Heart right ventricle (tissue), 16 donors: ENCODE measurements at regions of chr6 and their contacts with region 1.

Region 1: GRCh38 chr6:33200219-33201146 is at the starts of genes RXRB and SLC39A7:
- DNase-seq: peak; percentile 99 to 100
- ATAC-seq: peak; percentile 84 to 95 (median 92)
- H3K4me3 ChIP-seq: peak within 1 kb of the TSS; percentile 56 to 97 (median 80)
- H3K27ac ChIP-seq: peak within 1 kb of the TSS; percentile 94 to 99 (median 98)
- H3K4me1 ChIP-seq: peaks cover 27 to 78% (median 66%) of the 10 kb centered on the region in 9 donors
- H3K27me3 ChIP-seq: no peaks in the 10 kb centered on the region
- CTCF ChIP-seq: no peak
- total RNA-seq, gene RXRB: 29.7 to 39.1 (median 33.2) TPM
- total RNA-seq, gene SLC39A7: 44.8 to 104 (median 53.1) TPM

Region 2: DNA sequence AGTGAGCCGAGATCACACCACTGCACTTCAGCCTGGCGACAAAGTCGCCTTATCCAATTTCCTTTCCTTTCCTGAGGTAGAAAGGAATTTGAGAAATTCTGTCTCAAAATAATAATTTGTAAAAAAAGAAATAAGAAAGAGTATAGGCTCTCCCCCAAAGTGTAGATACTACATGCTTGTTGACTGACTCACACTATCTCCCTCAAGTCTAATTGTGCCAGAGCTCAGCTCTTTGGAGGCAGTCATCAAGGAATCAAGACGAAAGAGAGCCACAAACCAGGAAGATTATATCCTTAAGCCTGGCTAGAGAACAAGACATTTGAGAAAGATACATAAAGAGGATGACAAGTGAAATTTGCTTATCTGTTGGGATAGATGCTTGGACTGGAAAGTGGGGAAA is 1066.7 kb before region 1 on chr6:
- intact Hi-C with region 1: loop called in 1 of 10 experiments (anchors 2 kb)
- DNase-seq: no peak
- ATAC-seq: no peak
- H3K4me3 ChIP-seq: no peak overlapping the region
- H3K27ac ChIP-seq: no peak overlapping the region
- H3K4me1 ChIP-seq: peaks cover 9 to 15% (median 14%) of the 10 kb centered on the region in 9 donors
- H3K27me3 ChIP-seq: peaks cover 0 to 7% (median 0%) of the 10 kb centered on the region in 7 donors
- CTCF ChIP-seq: no peak

Region 3: GRCh38 chr6:32177788-32178546 is 1022.5 kb before region 1 on chr6 and contains the start of gene RNF5:
- intact Hi-C with region 1: loop called in 1 of 10 experiments (anchors 10 kb)
- DNase-seq: peak; percentile 87 to 99
- ATAC-seq: peak; percentile 82 to 89 (median 86)
- H3K4me3 ChIP-seq: peak within 1 kb of the TSS; percentile 56 to 93 (median 86)
- H3K27ac ChIP-seq: peak within 1 kb of the TSS; percentile 93 to 98 (median 94)
- H3K4me1 ChIP-seq: peaks cover 8 to 84% (median 55%) of the 10 kb centered on the region in 9 donors
- H3K27me3 ChIP-seq: no peaks in the 10 kb centered on the region
- CTCF ChIP-seq: no peak
- total RNA-seq, gene RNF5: 75.5 to 122 (median 82.7) TPM

Region 4: DNA sequence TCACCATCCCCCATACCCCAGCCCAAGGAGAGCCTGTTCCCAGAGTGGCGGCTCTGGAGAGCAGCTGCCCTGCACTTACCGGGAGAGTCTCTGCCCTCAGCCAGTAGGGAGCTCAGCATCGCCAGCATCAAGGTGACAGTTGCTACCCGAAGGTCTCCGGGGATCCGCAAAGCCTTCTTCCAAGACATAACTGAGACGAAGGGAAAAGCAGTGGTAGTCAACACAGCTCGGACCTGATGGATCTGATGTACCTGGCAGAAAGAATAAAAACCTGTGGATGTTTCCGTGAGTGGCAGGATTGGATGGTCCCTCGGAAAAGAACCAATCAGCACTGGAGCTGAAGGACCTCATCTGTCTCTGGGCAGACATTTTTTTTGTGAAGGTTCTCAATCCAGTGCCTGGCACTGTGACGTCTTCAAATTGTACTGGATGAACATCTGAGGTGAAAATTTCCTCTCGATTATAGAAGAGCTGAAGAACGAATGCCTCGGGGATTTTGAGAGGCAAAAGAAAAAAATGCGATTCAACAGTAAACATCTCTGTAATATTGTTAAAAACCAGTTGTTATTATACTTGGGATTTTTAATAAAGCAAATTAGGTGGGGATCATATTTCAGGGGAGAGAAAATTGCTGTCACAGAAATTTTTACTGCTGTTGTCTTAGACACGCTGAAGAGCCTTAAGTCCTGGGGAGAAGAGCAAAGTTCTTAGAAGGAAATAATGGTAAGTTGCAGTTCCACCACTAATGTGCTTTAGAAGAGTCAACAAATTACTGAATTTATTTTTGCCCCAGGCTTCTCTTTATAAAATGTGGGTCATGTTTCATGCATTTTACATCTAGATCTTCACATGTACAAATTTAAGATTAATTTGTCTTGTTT is 533.8 kb before region 1 on chr6 and contains the start of gene HLA-DQB1:
- intact Hi-C with region 1: no loop called
- DNase-seq: peak in 1 of 2 donors; percentile 61
- ATAC-seq: peak; percentile 69 to 89 (median 84)
- H3K4me3 ChIP-seq: peak within 1 kb of the TSS in 7 of 10 donors; percentile 36 to 57 (median 41)
- H3K27ac ChIP-seq: peak within 1 kb of the TSS in 8 of 10 donors; percentile 19 to 82 (median 72)
- H3K4me1 ChIP-seq: peaks cover 0 to 12% (median 0%) of the 10 kb centered on the region in 9 donors
- H3K27me3 ChIP-seq: peaks cover 0 to 14% (median 0%) of the 10 kb centered on the region in 7 donors
- CTCF ChIP-seq: no peak
- total RNA-seq, gene HLA-DQB1: 6.2 to 73.7 (median 14.4) TPM

Region 5: GRCh38 chr6:33147807-33148666 is 52.4 kb before region 1 on chr6:
- intact Hi-C with region 1: no loop called
- DNase-seq: no peak
- ATAC-seq: no peak
- H3K4me3 ChIP-seq: no peak overlapping the region
- H3K27ac ChIP-seq: no peak overlapping the region
- H3K4me1 ChIP-seq: peaks cover 0 to 15% (median 0%) of the 10 kb centered on the region in 9 donors
- H3K27me3 ChIP-seq: peaks cover 0 to 25% (median 17%) of the 10 kb centered on the region in 7 donors
- CTCF ChIP-seq: peak; percentile 43 to 87 (median 82)

Region 6: GRCh38 chr6:33161354-33162331 is 38.8 kb before region 1 on chr6:
- intact Hi-C with region 1: loop called in 7 of 10 experiments (anchors 2 to 5 kb)
- DNase-seq: peak; percentile 77 to 86
- ATAC-seq: peak; percentile 83 to 96 (median 91)
- H3K4me3 ChIP-seq: peak overlapping the region; percentile 44 to 60 (median 55)
- H3K27ac ChIP-seq: peak overlapping the region in 7 of 10 donors; percentile 22 to 55 (median 44)
- H3K4me1 ChIP-seq: peaks cover 0 to 21% (median 7%) of the 10 kb centered on the region in 9 donors
- H3K27me3 ChIP-seq: no peaks in the 10 kb centered on the region
- CTCF ChIP-seq: peak; percentile 93 to 100 (median 95)

Region 7: GRCh38 chr6:33235221-33235634 is 34.7 kb after region 1 on chr6:
- intact Hi-C with region 1: no loop called
- DNase-seq: no peak
- ATAC-seq: no peak
- H3K4me3 ChIP-seq: no peak overlapping the region
- H3K27ac ChIP-seq: no peak overlapping the region
- H3K4me1 ChIP-seq: no peaks in the 10 kb centered on the region
- H3K27me3 ChIP-seq: peaks cover 0 to 47% (median 22%) of the 10 kb centered on the region in 7 donors
- CTCF ChIP-seq: no peak

Region 8: GRCh38 chr6:33700391-33701050 is 500.0 kb after region 1 on chr6:
- intact Hi-C with region 1: loop called in 1 of 10 experiments (anchors 10 kb)
- DNase-seq: peak; percentile 61 to 62
- ATAC-seq: peak in 7 of 8 donors; percentile 22 to 66 (median 50)
- H3K4me3 ChIP-seq: no peak overlapping the region
- H3K27ac ChIP-seq: peak overlapping the region in 4 of 10 donors; percentile 19 to 60 (median 24)
- H3K4me1 ChIP-seq: peaks cover 18 to 69% (median 46%) of the 10 kb centered on the region in 9 donors
- H3K27me3 ChIP-seq: no peaks in the 10 kb centered on the region
- CTCF ChIP-seq: peak; percentile 38 to 77 (median 68)